ENCODE measurements at regions of chr2 and their contacts with region 1.

Region 1: GRCh38 chr2:55923091-55923981 is at the start of gene EFEMP1:
- DNase-seq: peak; percentile 62
- ATAC-seq: peak; percentile 94
- H3K4me3 ChIP-seq: peak within 1 kb of the TSS; percentile 92
- H3K27ac ChIP-seq: peak within 1 kb of the TSS; percentile 86
- H3K4me1 ChIP-seq: no peaks in the 10 kb centered on the region; the same call in 1 of the 2 replicates
- H3K27me3 ChIP-seq: peaks cover 4% of the 10 kb centered on the region; the same call in 1 of the 2 replicates
- CTCF ChIP-seq: no peak
- POLR2A ChIP-seq: 0 out of 2 replicates have a peak, but pooled peaks have one; percentile 28
- RAD21 ChIP-seq: 0 out of 2 replicates have a peak, but pooled peaks have one; percentile 1
- total RNA-seq, gene EFEMP1: 164 and 214 TPM in 2 replicates

Region 2: GRCh38 chr2:55761526-55761925 is 161.8 kb before region 1 on chr2:
- CTCF ChIA-PET with region 1: no interaction called
- POLR2A ChIA-PET with region 1: no interaction called
- dilution Hi-C with region 1: no loop called
- in situ Hi-C with region 1: no loop called
- intact Hi-C with region 1: no loop called
- DNase-seq: peak; percentile 23
- ATAC-seq: peak; percentile 62
- H3K4me3 ChIP-seq: no peak overlapping the region
- H3K27ac ChIP-seq: no peak overlapping the region; the same call in 1 of the 2 replicates
- H3K4me1 ChIP-seq: peaks cover 2% of the 10 kb centered on the region; the same call in 1 of the 2 replicates
- H3K27me3 ChIP-seq: no peaks in the 10 kb centered on the region
- CTCF ChIP-seq: no peak
- POLR2A ChIP-seq: no peak
- RAD21 ChIP-seq: no peak

Region 3: DNA sequence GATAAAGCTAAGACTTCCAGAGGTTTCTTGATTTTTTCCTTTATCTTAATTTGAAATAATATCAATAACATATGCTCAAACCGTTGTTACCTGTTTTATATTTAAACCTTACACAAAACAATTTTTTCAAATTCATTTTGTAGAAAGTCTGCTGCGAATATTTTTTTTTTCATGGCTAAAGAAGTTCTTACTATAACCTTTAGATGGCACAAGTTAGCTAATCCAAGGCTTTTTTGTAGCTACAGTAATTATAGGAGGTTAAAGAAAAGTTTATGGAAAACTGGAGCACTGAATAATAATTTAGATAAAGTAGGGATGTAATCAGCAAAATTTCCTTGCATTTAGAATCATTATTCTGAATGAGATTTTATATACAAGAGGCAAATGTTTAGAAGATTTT is 151.7 kb before region 1 on chr2:
- CTCF ChIA-PET with region 1: no interaction called
- POLR2A ChIA-PET with region 1: no interaction called
- dilution Hi-C with region 1: no loop called
- in situ Hi-C with region 1: no loop called
- intact Hi-C with region 1: loop called (anchors 2 kb)
- DNase-seq: peak; percentile 67
- ATAC-seq: peak; percentile 79
- H3K4me3 ChIP-seq: no peak overlapping the region
- H3K27ac ChIP-seq: no peak overlapping the region
- H3K4me1 ChIP-seq: peaks cover 5% of the 10 kb centered on the region
- H3K27me3 ChIP-seq: no peaks in the 10 kb centered on the region
- CTCF ChIP-seq: peak; percentile 91
- POLR2A ChIP-seq: no peak
- RAD21 ChIP-seq: peak; percentile 90

Region 4: DNA sequence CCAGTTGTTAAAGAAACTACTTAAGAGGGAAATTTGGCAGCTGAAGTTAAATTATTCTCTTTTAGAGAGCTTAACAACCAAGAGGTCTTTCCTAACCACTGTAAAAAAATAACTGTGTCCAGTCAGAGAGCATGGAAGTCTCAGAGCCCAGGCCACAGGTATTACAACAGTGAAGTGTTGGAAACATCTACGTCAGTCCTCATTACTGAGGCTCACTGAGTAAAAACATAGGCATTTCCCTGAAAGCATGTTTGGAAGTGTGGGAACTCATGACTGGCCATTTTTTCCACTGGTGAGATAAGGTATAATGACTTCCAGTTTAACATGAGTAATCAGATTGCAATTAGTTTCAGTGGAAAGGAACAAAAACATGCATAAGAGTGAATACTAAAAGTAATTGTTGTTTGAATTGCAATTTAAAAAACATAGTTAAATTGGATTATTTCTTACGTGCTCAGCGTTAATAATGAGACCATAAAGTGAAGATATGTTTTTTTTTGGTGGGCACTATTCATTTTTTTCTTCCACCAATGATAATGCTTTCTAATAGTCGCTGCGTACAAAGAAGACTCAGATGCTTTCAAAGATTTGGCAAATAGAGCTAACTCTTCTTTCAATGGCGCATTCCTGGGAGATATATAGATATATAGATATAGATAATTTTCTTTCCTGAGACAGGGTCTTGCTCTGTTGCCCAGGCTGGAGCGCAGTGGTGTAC is 60.5 kb before region 1 on chr2:
- CTCF ChIA-PET with region 1: no interaction called
- POLR2A ChIA-PET with region 1: no interaction called
- dilution Hi-C with region 1: no loop called
- in situ Hi-C with region 1: no loop called
- intact Hi-C with region 1: loop called (anchors 2 kb)
- DNase-seq: peak; percentile 100
- ATAC-seq: peak; percentile 89
- H3K4me3 ChIP-seq: no peak overlapping the region
- H3K27ac ChIP-seq: peak overlapping the region; percentile 100
- H3K4me1 ChIP-seq: peaks cover 16% of the 10 kb centered on the region
- H3K27me3 ChIP-seq: no peaks in the 10 kb centered on the region
- CTCF ChIP-seq: no peak
- POLR2A ChIP-seq: peak; percentile 8; the same call in 1 of the 2 replicates
- RAD21 ChIP-seq: no peak

Region 5: DNA sequence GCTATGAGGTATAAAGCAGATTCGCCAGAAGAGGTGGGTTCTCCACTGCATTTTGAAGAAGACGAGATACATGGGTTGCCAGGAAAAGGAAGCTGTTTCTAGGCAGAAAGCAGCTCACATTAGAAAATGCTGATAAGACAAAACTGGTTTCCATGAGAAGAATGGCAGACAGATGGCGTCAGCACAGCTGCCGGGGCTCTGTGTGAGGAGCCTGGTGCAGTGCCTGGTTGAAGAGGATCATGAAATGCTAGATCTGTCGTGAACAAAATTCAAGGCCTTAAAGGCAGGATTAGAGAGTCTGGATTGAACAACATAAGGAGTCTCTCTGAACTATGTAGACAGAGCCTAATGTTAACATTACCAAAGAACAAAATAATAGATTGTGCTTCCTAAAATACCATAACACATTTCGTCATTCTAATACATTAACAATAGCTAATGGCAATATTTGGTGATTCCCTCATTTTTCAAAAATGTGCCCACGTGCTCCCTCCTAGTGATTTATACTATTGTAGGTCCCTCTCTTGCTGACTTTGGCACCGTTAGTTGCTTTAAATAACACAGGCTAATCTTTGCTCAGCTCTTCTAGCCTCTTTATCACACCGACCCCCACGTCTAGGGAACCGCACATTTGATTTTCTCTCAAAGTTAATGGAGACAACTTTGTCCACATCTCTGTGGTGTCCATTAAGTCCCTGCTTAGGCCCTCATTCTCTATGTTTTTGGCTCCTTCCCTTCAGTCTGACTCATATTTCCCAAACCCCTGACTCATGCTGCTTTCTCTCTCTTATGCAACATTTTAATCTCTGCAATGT is 38.0 kb before region 1 on chr2:
- CTCF ChIA-PET with region 1: no interaction called
- POLR2A ChIA-PET with region 1: no interaction called
- dilution Hi-C with region 1: no loop called
- in situ Hi-C with region 1: no loop called
- intact Hi-C with region 1: loop called (anchors 5 kb)
- DNase-seq: peak; percentile 96
- ATAC-seq: peak; percentile 71
- H3K4me3 ChIP-seq: no peak overlapping the region
- H3K27ac ChIP-seq: peak overlapping the region; percentile 100
- H3K4me1 ChIP-seq: peaks cover 31% of the 10 kb centered on the region
- H3K27me3 ChIP-seq: no peaks in the 10 kb centered on the region
- CTCF ChIP-seq: no peak
- POLR2A ChIP-seq: no peak
- RAD21 ChIP-seq: no peak

Region 6: DNA sequence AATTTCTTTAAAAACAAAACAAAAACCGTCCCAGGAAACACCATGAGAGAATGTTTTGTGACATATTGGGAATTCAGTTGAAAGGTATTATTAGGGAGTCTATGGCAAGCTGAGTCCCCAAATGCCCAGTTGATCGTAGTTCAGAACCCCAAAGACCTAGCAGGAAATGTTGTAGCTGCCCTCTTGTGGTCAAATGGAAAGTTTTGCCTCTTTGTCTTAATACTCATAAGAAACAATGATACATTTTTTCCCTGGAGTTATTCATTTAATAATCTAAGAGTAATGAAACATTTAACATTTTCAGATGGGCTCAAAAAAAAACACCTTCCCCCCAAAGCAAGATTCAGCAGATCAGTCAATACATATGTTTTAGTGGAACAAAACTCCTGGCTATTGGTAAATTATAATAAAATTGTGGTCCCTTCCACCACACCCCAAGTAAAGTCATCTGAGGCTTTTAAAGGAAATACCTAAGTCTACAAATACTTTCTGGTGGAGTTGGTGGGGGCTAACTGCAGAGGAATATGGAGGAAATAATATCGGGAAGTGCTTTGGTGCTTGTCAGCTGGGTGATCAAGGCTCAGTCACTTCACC is 38.1 kb after region 1 on chr2:
- CTCF ChIA-PET with region 1: no interaction called
- POLR2A ChIA-PET with region 1: no interaction called
- dilution Hi-C with region 1: no loop called
- in situ Hi-C with region 1: no loop called
- intact Hi-C with region 1: loop called (anchors 2 kb)
- DNase-seq: peak; percentile 66
- ATAC-seq: peak; percentile 73
- H3K4me3 ChIP-seq: no peak overlapping the region
- H3K27ac ChIP-seq: no peak overlapping the region
- H3K4me1 ChIP-seq: peaks cover 8% of the 10 kb centered on the region
- H3K27me3 ChIP-seq: no peaks in the 10 kb centered on the region
- CTCF ChIP-seq: peak; percentile 71
- POLR2A ChIP-seq: no peak
- RAD21 ChIP-seq: peak; percentile 74

Region 7: GRCh38 chr2:55992465-55992864 is 69.1 kb after region 1 on chr2:
- CTCF ChIA-PET with region 1: interaction called, 3 read pairs
- POLR2A ChIA-PET with region 1: no interaction called
- dilution Hi-C with region 1: no loop called
- in situ Hi-C with region 1: no loop called
- intact Hi-C with region 1: loop called (anchors 5 kb)
- DNase-seq: peak; percentile 100
- ATAC-seq: peak; percentile 94
- H3K4me3 ChIP-seq: no peak overlapping the region
- H3K27ac ChIP-seq: no peak overlapping the region
- H3K4me1 ChIP-seq: peaks cover 8% of the 10 kb centered on the region
- H3K27me3 ChIP-seq: no peaks in the 10 kb centered on the region
- CTCF ChIP-seq: no peak
- POLR2A ChIP-seq: no peak
- RAD21 ChIP-seq: no peak

Region 8: GRCh38 chr2:56009758-56010458 is 86.6 kb after region 1 on chr2:
- CTCF ChIA-PET with region 1: interaction called, 4 read pairs
- POLR2A ChIA-PET with region 1: no interaction called
- dilution Hi-C with region 1: no loop called
- in situ Hi-C with region 1: no loop called
- intact Hi-C with region 1: loop called (anchors 5 kb)
- DNase-seq: peak; percentile 70
- ATAC-seq: no peak
- H3K4me3 ChIP-seq: no peak overlapping the region
- H3K27ac ChIP-seq: no peak overlapping the region
- H3K4me1 ChIP-seq: peaks cover 3% of the 10 kb centered on the region
- H3K27me3 ChIP-seq: no peaks in the 10 kb centered on the region
- CTCF ChIP-seq: peak; percentile 84
- POLR2A ChIP-seq: no peak
- RAD21 ChIP-seq: peak; percentile 85

Measured in IMR-90 (cell line).